ENCODE measurements at regions of chr9 and their contacts with region 1.

Region 1: GRCh38 chr9:126398403-126399058 is 71.9 kb downstream of the MVB12B start:
- DNase-seq: peak; percentile 51 to 80
- ATAC-seq: peak; percentile 88 to 96; a peak in 5 of 6 replicates
- H3K4me3 ChIP-seq: no peak overlapping the region
- H3K27ac ChIP-seq: no peak overlapping the region
- H3K4me1 ChIP-seq: peaks cover 10% of the 10 kb centered on the region
- CTCF ChIP-seq: peak; percentile 93
- EP300 ChIP-seq: no peak
- POLR2A ChIP-seq: no peak
- RAD21 ChIP-seq: peak; percentile 93 to 96

Region 2: GRCh38 chr9:125805057-125805456 is 593.5 kb before region 1 on chr9:
- CTCF ChIA-PET with region 1: no interaction called
- POLR2A ChIA-PET with region 1: no interaction called
- DNase-seq: no peak
- ATAC-seq: no peak
- H3K4me3 ChIP-seq: no peak overlapping the region
- H3K27ac ChIP-seq: no peak overlapping the region
- H3K4me1 ChIP-seq: peaks cover 20% of the 10 kb centered on the region
- CTCF ChIP-seq: no peak
- EP300 ChIP-seq: no peak
- POLR2A ChIP-seq: no peak
- RAD21 ChIP-seq: no peak

Region 3: DNA sequence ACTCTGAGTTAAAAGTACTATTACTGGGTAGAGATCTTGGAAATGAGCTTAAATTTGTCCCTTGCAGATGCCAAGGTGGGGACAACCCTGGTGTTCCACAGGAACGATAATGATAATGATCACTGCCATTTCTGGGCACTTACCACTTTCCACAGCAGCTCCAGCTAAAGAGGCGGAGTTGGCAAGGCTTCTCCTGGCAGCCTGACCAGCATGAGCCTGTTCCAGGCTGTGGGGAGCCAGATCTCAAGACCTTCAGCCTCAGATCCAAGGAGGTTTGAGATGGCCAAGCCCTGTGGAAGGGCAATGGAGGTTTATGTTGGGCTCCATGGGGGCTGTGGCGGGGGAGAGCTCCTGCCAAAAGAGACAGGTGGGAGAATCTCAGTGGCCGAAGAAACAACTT is 316.8 kb before region 1 on chr9:
- CTCF ChIA-PET with region 1: no interaction called
- POLR2A ChIA-PET with region 1: no interaction called
- DNase-seq: no peak
- ATAC-seq: no peak
- H3K4me3 ChIP-seq: no peak overlapping the region
- H3K27ac ChIP-seq: no peak overlapping the region
- H3K4me1 ChIP-seq: no peaks in the 10 kb centered on the region
- CTCF ChIP-seq: no peak
- EP300 ChIP-seq: no peak
- POLR2A ChIP-seq: no peak
- RAD21 ChIP-seq: no peak

Region 4: GRCh38 chr9:126309427-126310189 is 88.9 kb before region 1 on chr9:
- CTCF ChIA-PET with region 1: interaction called, 198 read pairs
- POLR2A ChIA-PET with region 1: no interaction called
- DNase-seq: no peak
- ATAC-seq: no peak
- H3K4me3 ChIP-seq: no peak overlapping the region
- H3K27ac ChIP-seq: no peak overlapping the region
- H3K4me1 ChIP-seq: no peaks in the 10 kb centered on the region
- CTCF ChIP-seq: no peak
- EP300 ChIP-seq: no peak
- POLR2A ChIP-seq: no peak
- RAD21 ChIP-seq: no peak

Region 5: DNA sequence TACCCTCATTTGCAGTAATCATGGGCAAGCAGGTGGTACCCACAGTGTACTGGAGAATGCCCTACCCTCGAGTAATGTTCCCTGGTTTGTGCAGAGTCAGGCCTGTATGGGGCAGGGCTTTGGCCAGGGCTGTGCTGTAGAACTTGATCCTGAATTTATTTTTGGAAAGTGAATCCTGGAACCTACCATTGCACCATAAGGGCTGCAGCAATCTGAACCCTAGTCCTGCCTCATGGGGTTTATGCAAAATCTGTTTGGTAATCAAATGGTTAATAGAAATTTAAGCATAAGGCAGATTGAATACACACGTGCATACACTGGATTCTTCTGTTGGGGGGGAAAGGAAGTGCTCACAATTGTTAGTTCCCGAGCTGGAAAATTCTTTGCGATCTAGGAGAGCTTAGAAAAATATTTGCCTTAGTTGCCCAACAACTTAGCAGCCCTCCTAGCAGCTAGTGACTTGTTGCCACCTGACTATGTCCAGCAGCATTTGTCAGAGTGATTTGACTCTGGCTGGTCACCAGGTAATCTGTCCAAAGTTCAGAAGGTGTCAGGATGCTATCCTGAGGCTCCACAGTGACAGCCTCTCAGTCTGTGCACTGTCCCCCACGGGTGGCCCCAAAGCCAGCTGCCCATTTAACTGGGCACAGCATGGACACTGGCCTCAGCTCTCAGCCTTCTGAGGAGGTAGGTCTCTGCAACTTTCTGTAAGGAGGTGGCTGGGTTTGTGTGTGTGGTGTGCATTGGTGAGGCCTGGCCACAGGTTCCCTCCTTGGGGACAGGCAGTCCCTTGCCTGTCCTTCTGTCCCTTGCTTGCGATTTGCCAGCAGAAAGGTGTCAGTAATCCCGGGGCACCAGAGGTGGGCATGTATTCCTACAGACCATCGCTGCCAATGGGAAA is 63.6 kb before region 1 on chr9:
- CTCF ChIA-PET with region 1: interaction called, 24 read pairs
- POLR2A ChIA-PET with region 1: no interaction called
- DNase-seq: peak in 1 of 2 experiments; percentile 11
- ATAC-seq: peak; percentile 15 to 40; a peak in 1 of 6 replicates
- H3K4me3 ChIP-seq: no peak overlapping the region
- H3K27ac ChIP-seq: no peak overlapping the region
- H3K4me1 ChIP-seq: 0 out of 3 replicates have a peak, but pooled peaks cover 9% of the 10 kb centered on the region
- CTCF ChIP-seq: no peak
- EP300 ChIP-seq: no peak
- POLR2A ChIP-seq: no peak
- RAD21 ChIP-seq: no peak

Region 6: GRCh38 chr9:126386088-126386487 is 12.4 kb before region 1 on chr9:
- CTCF ChIA-PET with region 1: interaction called, 34 read pairs
- POLR2A ChIA-PET with region 1: no interaction called
- DNase-seq: peak in 1 of 2 experiments; percentile 42
- ATAC-seq: peak; percentile 71 to 86; a peak in 4 of 6 replicates
- H3K4me3 ChIP-seq: no peak overlapping the region
- H3K27ac ChIP-seq: no peak overlapping the region
- H3K4me1 ChIP-seq: no peaks in the 10 kb centered on the region
- CTCF ChIP-seq: peak; percentile 18; the same call in 1 of the 3 replicates
- EP300 ChIP-seq: no peak
- POLR2A ChIP-seq: no peak
- RAD21 ChIP-seq: peak; percentile 28 to 45; a peak in 2 of 5 replicates

Region 7: DNA sequence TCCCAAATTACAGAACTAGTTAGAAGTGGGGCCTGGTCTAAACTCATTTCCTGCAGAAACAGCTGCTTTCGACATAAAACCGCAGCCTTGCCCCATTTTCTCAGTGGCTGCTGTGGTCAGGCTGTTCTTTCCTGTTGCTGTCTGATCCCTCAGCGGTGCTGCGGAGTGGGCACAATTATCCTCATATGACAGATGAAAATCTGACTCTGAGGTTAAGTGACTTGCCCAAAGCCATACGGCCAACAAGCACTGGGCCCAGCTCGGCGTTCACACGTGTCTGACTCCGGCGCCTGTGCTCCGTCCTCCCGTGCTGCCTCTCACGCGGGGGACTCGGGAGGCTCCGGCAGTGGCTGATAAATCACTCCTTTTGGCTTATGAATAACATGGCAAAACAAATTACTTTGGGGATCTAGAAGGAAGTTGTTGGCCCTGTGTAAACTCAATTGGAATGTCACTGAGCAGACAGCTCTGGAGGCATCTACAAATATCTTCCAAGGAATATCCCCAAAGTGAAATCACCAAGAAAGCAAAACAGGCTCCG is 72.6 kb after region 1 on chr9:
- CTCF ChIA-PET with region 1: interaction called, 12 read pairs
- POLR2A ChIA-PET with region 1: no interaction called
- DNase-seq: no peak
- ATAC-seq: no peak
- H3K4me3 ChIP-seq: no peak overlapping the region
- H3K27ac ChIP-seq: no peak overlapping the region
- H3K4me1 ChIP-seq: peaks cover 21% of the 10 kb centered on the region
- CTCF ChIP-seq: no peak
- EP300 ChIP-seq: no peak
- POLR2A ChIP-seq: no peak
- RAD21 ChIP-seq: no peak

Region 8: DNA sequence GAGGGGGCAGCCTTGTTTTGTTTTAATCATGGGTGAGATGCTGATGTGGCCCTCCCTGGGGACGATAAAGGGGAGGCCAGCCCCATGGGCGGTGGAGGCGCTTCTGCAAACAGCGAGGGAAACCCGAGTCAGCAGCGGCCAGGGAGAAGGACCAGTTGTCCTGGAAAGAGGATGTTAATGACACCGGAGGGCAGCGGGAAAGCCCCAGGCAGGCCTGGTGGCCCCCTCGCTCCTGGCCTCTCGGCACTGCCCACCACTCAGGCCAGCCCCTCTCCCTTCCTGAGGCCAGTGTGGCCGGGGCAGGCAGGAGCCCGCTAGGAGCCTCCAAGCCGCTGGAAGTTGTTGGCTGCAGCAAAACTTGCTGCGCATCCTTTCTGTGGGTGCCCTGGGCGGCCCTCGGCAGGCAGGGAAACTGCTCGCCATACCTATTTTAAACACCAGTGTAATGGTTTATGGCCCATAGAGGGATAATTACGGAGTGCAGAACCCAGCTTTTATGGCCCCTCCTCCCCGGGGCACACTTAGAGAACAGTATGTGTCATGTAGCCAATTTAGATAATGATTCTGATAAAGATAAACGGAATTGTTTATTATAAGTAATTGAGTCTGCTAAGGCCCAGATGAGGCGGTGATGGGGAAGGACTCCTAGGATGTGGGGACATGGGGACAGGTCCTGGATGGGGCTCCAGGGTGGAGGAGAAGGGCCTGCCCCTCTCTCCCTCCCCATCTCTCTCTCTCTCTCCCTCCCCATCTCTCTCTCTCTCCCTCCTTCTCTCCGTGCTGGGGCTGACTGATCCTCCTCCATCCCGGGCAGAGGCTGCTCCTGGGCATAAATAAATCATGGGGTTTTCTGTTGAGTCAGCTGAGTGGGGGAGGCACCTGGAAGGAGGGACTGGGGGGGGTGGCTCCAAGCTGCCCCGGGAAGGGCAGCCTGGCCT is 252.1 kb after region 1 on chr9:
- CTCF ChIA-PET with region 1: no interaction called
- POLR2A ChIA-PET with region 1: no interaction called
- DNase-seq: no peak
- ATAC-seq: no peak
- H3K4me3 ChIP-seq: no peak overlapping the region
- H3K27ac ChIP-seq: no peak overlapping the region
- H3K4me1 ChIP-seq: no peaks in the 10 kb centered on the region
- CTCF ChIP-seq: no peak
- EP300 ChIP-seq: no peak
- POLR2A ChIP-seq: no peak
- RAD21 ChIP-seq: no peak

Region 9: DNA sequence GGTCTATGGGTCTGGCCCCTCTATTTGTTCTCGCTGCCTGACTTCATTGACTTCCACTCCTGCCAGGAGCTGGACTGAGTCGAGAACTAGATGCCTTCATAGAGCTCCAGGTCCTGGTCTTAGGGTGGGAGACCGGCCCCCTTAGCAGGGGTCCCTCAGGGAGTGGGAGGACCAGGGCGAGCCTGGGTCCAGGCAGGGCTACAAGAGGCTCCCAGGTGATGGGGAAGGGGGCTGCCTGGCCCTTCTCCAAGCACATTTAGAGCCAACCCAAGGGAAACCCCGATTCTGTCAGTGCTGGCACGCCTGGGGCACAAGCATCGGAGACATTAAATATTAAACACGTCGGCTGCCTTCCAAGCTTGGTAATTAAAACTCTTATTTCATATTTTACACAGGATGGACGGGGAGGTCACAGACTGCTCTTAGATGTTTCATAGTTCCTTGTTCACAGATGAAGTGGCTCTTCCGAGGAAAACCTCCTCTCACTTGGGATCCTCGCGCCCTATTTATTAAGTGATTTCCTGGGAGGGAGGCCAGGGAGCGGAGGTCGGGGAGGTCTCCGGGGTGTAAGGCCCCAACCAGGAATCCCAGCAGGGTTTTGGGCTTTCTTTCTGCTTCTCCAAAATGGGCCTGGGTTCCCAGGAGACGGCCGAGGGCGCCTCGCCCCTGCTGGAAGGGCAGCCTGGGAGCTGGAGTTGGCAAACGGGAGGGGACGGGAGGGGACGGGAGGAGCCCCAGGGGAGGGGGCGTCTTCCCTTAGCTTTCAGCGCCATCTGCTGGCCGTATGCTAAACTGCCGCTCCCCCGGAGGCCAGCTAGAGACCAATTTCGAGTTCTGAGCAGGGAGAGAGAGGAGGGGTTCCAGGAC is 382.9 kb after region 1 on chr9:
- CTCF ChIA-PET with region 1: no interaction called
- POLR2A ChIA-PET with region 1: no interaction called
- DNase-seq: peak; percentile 73 to 78
- ATAC-seq: peak; percentile 92 to 98
- H3K4me3 ChIP-seq: peak overlapping the region; percentile 32
- H3K27ac ChIP-seq: peak overlapping the region; percentile 64 to 83; a peak in 5 of 6 replicates
- H3K4me1 ChIP-seq: 0 out of 3 replicates have a peak, but pooled peaks cover 4% of the 10 kb centered on the region
- CTCF ChIP-seq: peak; percentile 92
- EP300 ChIP-seq: no peak
- POLR2A ChIP-seq: no peak
- RAD21 ChIP-seq: peak; percentile 92 to 97

Measured in A549 (cell line).